ENCODE measurements at regions of chr3 and their contacts with region 1.

Region 1: GRCh38 chr3:112111785-112112402 is 21.2 kb downstream of the GCSAM start:
- DNase-seq: peak; percentile 53
- H3K4me3 Mint-ChIP-seq: no peak overlapping the region
- H3K27ac Mint-ChIP-seq: no peak overlapping the region
- H3K4me1 Mint-ChIP-seq: peaks cover 10% of the 10 kb centered on the region
- H3K27me3 Mint-ChIP-seq: no peaks in the 10 kb centered on the region

Region 2: GRCh38 chr3:112273536-112273935 is 161.6 kb after region 1 on chr3:
- intact Hi-C with region 1: no loop called
- DNase-seq: no peak
- H3K4me3 Mint-ChIP-seq: no peak overlapping the region
- H3K27ac Mint-ChIP-seq: no peak overlapping the region
- H3K4me1 Mint-ChIP-seq: no peaks in the 10 kb centered on the region
- H3K27me3 Mint-ChIP-seq: peaks cover 18% of the 10 kb centered on the region

Region 3: GRCh38 chr3:112293368-112294321 is 181.8 kb after region 1 on chr3 and contains the start of gene SLC9C1:
- intact Hi-C with region 1: loop called (anchors 5 kb)
- DNase-seq: peak; percentile 28
- H3K4me3 Mint-ChIP-seq: peak within 1 kb of the TSS; percentile 70
- H3K27ac Mint-ChIP-seq: peak within 1 kb of the TSS; percentile 83
- H3K4me1 Mint-ChIP-seq: peaks cover 45% of the 10 kb centered on the region
- H3K27me3 Mint-ChIP-seq: no peaks in the 10 kb centered on the region
- total RNA-seq, gene SLC9C1: 0.37 TPM in 1 of 2 replicates, not detected in the other